Motor neuron (in vitro differentiated cells): ENCODE measurements at regions of chr15 and their contacts with region 1.

Region 1: GRCh38 chr15:72783563-72784237 is at the start of gene ADPGK:
- ATAC-seq: peak; percentile 77 to 89 (median 84)
- H3K4me3 ChIP-seq: peak within 1 kb of the TSS; percentile 71 to 85 (median 78)
- H3K27ac ChIP-seq: peak within 1 kb of the TSS; percentile 84
- H3K4me1 ChIP-seq: peaks cover 10 to 19% of the 10 kb centered on the region in 2 donors
- total RNA-seq, gene ADPGK: 17.5 to 78.3 (median 28.7) TPM

Region 2: DNA sequence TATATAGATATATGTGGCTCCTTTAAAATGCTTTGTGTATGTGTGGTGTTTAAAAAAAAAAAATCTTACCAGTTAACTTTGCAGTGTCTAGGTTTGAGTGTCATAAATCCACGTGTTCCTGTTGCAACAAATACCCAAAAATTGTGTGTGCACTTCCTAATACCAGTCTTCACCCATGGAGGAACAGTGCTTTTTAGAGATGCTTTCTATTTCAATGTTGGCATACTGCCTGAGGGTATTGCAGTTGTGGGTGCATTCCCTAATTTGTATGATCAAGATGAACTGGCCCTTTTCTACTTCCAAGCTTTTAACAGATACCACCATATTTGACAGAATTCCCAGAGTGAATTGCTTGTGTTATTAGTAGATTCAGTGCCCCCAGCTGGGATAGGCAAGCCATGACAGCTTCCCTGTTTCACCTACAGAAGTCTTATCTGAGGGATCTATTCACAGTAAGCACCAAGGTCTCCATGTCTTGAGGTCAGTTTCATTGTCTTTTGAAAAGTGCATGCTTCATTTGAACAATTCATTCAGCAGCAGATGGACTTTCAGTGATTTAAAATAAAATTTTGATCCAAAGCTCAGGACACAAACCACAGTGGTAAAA is 198.1 kb before region 1 on chr15:
- in situ Hi-C with region 1: no loop called
- ATAC-seq: peak in 2 of 8 experiments; percentile 20 to 30
- H3K4me3 ChIP-seq: no peak overlapping the region
- H3K27ac ChIP-seq: no peak overlapping the region
- H3K4me1 ChIP-seq: no peaks in the 10 kb centered on the region

Region 3: GRCh38 chr15:73051811-73052678 is 268.3 kb after region 1 on chr15 and contains the start of gene NEO1:
- in situ Hi-C with region 1: loop called in 1 of 9 experiments (anchors 25 kb)
- ATAC-seq: peak; percentile 77 to 84 (median 80)
- H3K4me3 ChIP-seq: peak within 1 kb of the TSS; percentile 50 to 78 (median 67)
- H3K27ac ChIP-seq: peak within 1 kb of the TSS; percentile 93 to 95
- H3K4me1 ChIP-seq: peaks cover 0 to 13% of the 10 kb centered on the region in 2 donors
- total RNA-seq, gene NEO1: 21.5 to 98.0 (median 48.5) TPM

Region 4: GRCh38 chr15:73081321-73081958 is 297.7 kb after region 1 on chr15:
- in situ Hi-C with region 1: loop called in 6 of 9 experiments (anchors 10 to 25 kb)
- ATAC-seq: peak in 4 of 8 experiments; percentile 33 to 64 (median 53)
- H3K4me3 ChIP-seq: no peak overlapping the region
- H3K27ac ChIP-seq: no peak overlapping the region
- H3K4me1 ChIP-seq: peaks cover 3% of the 10 kb centered on the region in 2 donors

Region 5: GRCh38 chr15:73273181-73274002 is 489.7 kb after region 1 on chr15:
- in situ Hi-C with region 1: loop called in 4 of 9 experiments (anchors 25 kb)
- ATAC-seq: peak; percentile 93 to 99 (median 96)
- H3K4me3 ChIP-seq: peak overlapping the region in 1 of 5 donors; percentile 12
- H3K27ac ChIP-seq: no peak overlapping the region
- H3K4me1 ChIP-seq: no peaks in the 10 kb centered on the region